Dorsolateral prefrontal cortex (tissue), 120 donors: ENCODE measurements at regions of chr1 and their contacts with region 1.

Region 1: DNA sequence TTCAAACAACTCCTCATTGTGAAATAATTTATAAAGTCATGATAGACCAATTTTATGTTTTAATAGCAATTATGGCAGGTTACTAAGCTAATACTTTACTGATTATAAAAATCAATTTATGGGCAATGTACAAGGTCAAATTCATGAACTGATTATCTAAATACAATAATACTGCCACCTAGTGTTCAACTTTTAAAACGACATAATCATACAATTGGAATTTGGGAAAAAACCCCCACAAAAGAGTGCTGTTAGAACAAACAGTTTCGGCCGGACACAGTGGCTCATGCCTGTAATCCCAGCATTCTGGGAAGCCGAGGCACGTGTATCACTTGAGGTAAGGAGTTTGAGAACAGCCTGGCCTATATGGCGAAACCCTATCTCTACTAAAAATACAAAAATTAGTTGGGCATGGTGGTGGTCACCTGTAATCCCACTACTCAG is 14.0 kb downstream of the GTF2B start:
- DNase-seq: no peak
- H3K4me3 ChIP-seq: no peak overlapping the region
- H3K27ac ChIP-seq: peak overlapping the region in 9 of 59 donors; percentile 0 to 53 (median 20)
- H3K27me3 ChIP-seq: no peaks in the 10 kb centered on the region
- CTCF ChIP-seq: peak; percentile 50 to 90 (median 72)

Region 2: DNA sequence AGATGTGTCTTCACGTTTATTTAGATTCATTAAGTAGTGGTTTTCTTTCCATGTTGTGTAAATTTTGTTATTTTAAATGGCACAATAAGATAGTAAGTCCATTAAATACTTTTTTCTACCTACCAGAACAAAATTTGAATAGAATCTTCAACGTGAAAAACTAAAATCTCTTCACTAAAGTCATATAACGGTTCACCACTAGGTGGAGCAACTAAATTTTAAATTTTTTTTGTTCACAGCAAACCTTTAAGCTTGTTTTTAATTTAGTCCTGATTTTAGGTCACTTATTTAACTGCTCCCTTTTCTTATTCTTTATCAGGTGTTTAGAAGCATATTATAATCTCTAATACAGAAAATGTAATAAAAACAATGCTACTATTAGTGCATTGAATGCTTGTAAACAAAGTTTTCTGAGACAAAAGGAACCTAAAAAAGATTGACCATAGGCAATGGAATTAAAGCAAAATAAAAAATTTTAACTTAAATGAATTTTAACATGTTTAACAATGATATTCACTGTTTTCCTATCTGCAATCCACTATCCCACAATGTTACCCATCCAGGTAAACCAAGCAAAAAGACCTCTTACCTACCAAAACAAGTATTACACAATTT is 221.6 kb before region 1 on chr1:
- intact Hi-C with region 1: loop called (anchors 5 to 10 kb)
- DNase-seq: no peak
- H3K4me3 ChIP-seq: no peak overlapping the region
- H3K27ac ChIP-seq: no peak overlapping the region
- H3K27me3 ChIP-seq: no peaks in the 10 kb centered on the region
- CTCF ChIP-seq: peak; percentile 60 to 98 (median 79)

Region 3: GRCh38 chr1:88683541-88684481 is 193.6 kb before region 1 on chr1 and contains the start of gene PKN2:
- intact Hi-C with region 1: loop called in 1 of 2 experiments (anchors 10 kb)
- DNase-seq: peak; percentile 87 to 96 (median 91)
- H3K4me3 ChIP-seq: peak within 1 kb of the TSS; percentile 58 to 98 (median 90)
- H3K27ac ChIP-seq: peak within 1 kb of the TSS; percentile 44 to 96 (median 89)
- H3K27me3 ChIP-seq: no peaks in the 10 kb centered on the region
- CTCF ChIP-seq: peak in 52 of 56 donors; percentile 21 to 72 (median 48)
- total RNA-seq, gene PKN2: 26.8 to 61.3 (median 41.1) TPM

Region 4: DNA sequence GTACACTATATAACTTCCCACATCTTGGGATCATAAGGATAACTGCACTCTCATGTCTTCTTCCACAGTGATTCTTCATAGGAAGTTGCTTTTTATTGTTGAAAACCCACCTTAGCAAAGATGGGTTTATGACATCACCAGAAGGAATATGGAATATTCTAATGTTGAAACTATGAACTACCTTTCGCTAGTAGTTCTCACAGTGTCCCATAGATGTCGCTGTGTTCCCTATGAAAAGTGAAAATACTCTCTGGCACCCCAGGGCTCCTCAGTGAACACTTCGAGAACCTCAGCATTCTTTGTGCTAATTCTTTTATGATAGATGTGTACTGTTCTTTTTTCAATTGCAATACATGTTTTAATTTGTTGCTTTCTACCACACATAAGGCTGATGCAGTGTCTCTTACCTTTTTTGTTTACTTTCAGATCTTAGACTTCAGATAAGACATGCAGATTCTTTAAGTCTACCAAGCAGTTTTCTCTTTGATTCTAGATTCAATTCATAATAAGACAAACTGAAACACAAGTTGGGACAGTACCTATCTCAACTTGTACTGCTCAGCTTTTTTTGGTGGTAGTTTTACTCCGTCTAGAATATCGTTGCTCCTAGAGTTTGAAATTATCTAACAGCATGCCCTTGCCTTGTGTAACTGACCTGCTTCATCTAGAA is 76.9 kb before region 1 on chr1:
- intact Hi-C with region 1: loop called in 1 of 2 experiments (anchors 5 kb)
- DNase-seq: no peak
- H3K4me3 ChIP-seq: no peak overlapping the region
- H3K27ac ChIP-seq: no peak overlapping the region
- H3K27me3 ChIP-seq: no peaks in the 10 kb centered on the region
- CTCF ChIP-seq: peak; percentile 30 to 76 (median 63)